Activated CD4-positive, alpha-beta memory T cell treated with anti-CD3 and anti-CD28 coated beads, Interleukin-2, amount 10 ng/mL, durations not matched to agents 7 days and 5 days (primary cell): ENCODE measurements at regions of chr11 and their contacts with region 1.

Region 1: DNA sequence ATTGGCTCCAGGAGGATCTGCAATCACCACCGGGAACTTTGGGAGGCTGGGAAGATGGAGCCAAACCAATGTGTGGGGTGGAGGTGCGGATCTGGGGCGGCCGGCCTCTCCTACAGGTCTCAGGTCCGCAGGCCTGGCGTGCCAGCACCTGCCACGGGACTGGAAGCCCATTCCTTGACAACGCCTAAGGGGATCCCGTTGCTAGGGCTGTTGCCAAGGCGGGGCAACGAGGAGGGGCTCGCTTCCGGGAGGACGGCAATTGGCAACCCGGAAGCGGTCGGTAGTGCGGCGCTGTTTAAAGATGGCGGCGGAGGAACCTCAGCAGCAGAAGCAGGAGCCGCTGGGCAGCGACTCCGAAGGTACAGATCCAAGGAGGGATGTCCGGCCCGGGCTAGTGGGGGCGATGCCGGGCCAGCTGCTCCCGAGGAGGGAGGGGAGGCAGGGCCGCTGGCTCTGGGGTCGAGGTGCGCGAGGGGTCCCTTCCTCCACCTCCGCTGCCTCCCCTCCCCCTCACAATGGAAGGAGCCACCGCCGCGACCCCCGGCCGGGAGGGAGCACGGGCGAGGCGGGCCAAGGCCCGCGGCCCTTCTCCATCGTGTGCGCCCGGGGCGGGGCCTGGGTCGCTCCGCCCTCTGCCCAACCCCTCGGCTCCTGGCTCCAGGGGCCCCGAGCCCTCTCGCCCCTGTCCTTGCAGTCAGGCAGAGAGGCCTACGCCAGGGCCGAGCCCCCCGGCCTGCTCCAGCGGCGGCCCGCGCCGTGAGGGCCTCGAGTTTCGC is at the start of gene OTUB1:
- DNase-seq: peak; percentile 91
- H3K4me3 Mint-ChIP-seq: peak within 1 kb of the TSS; percentile 100
- H3K27ac Mint-ChIP-seq: peak within 1 kb of the TSS; percentile 93
- H3K4me1 Mint-ChIP-seq: peaks cover 37% of the 10 kb centered on the region
- H3K27me3 Mint-ChIP-seq: no peaks in the 10 kb centered on the region
- total RNA-seq, gene OTUB1: 86.8 to 93.6 TPM

Region 2: GRCh38 chr11:63614136-63614664 is 372.1 kb before region 1 on chr11 and contains the start of gene PLAAT3:
- CTCF ChIA-PET with region 1: no interaction called
- POLR2A ChIA-PET with region 1: no interaction called
- DNase-seq: peak; percentile 44
- H3K4me3 Mint-ChIP-seq: peak within 1 kb of the TSS; percentile 78
- H3K27ac Mint-ChIP-seq: no peak within 1 kb of the TSS
- H3K4me1 Mint-ChIP-seq: peaks cover 24% of the 10 kb centered on the region
- H3K27me3 Mint-ChIP-seq: peaks cover 5% of the 10 kb centered on the region
- total RNA-seq, gene PLAAT3: 13.1 to 14.9 TPM

Region 3: DNA sequence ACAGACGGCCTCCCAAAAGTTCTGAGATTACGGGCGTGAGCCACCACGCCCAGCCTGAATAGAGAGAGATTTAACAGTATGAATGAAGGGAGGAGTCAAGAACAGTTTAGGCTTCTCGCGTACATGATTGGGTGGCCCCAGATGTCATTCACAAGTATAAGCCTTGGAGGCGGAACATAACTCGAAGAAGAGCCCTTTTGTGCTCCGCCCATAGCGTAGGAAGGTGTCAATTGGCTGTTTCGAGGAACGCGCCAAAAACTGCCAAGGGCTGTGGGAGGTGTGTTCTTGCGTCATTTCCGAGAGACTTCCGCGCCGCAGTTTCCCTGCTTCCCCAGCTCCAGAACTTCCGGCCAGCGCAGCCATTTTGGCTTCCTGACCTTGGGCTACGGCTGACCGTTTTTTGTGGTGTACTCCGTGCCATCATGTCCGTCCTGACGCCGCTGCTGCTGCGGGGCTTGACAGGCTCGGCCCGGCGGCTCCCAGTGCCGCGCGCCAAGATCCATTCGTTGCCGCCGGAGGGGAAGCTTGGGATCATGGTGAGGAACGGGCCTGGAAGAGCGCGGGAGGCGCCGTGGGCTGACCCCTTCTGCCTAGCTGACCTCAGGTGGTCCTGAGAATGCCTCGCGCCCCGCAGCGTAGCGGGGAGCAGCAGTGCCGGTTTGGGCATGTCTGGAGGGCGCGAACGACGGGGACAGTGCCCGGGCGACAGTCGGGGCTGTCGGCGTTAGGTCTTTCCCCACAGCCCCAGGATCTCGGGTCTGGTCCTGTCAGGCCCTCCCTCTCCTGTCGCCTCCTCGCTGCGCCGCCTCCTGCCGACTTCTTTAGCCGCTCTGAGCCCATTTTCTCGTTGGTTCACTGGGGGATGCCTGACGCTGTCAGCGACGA is 11.8 kb before region 1 on chr11 and contains the start of gene COX8A:
- CTCF ChIA-PET with region 1: no interaction called
- POLR2A ChIA-PET with region 1: interaction called, 27 read pairs
- DNase-seq: peak; percentile 97
- H3K4me3 Mint-ChIP-seq: peak within 1 kb of the TSS; percentile 100
- H3K27ac Mint-ChIP-seq: peak within 1 kb of the TSS; percentile 98
- H3K4me1 Mint-ChIP-seq: peaks cover 38% of the 10 kb centered on the region
- H3K27me3 Mint-ChIP-seq: peaks cover under 1% of the 10 kb centered on the region
- total RNA-seq, gene COX8A: 506 to 527 TPM

Region 4: DNA sequence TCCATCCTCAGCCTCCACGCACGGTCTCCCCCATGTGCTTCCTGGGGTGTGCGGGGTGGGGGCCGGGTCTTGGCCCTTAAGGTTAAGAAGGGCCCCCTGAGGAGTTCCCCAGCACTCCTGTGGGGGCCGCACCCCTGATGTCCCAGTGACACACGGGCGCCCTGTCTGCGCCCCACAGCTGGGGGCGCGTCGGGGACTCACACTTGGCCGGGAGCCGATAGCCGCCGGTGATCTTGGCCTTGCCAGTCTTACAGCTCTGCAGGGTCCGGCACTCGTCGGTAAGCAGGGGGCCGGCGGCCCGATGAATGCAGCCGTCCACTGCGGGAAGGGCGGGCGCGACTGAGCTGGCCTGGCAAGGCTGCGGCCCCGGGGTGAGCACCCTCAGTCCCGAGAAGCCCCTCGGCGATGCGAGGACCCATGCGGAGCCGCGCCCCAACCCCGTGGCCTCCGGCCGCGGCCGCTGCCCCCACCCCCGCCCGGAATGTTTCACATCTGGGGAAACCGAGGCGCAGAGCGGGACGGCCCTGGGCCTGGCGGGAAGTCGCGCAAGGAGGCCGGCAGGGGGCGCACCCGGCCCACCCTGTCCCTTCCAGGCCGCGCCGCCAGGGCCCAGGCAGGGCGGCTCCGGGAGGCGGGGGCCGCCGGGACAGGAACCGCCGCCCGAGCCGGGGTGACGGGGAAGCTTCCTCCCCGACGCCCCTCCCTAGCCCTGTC is 13.8 kb after region 1 on chr11:
- CTCF ChIA-PET with region 1: interaction called, 7 read pairs
- POLR2A ChIA-PET with region 1: interaction called, 11 read pairs
- DNase-seq: peak; percentile 79
- H3K4me3 Mint-ChIP-seq: no peak overlapping the region
- H3K27ac Mint-ChIP-seq: no peak overlapping the region
- H3K4me1 Mint-ChIP-seq: peaks cover 11% of the 10 kb centered on the region
- H3K27me3 Mint-ChIP-seq: peaks cover 2% of the 10 kb centered on the region

Region 5: GRCh38 chr11:64015935-64016845 is 29.8 kb after region 1 on chr11:
- CTCF ChIA-PET with region 1: no interaction called
- POLR2A ChIA-PET with region 1: no interaction called
- DNase-seq: no peak
- H3K4me3 Mint-ChIP-seq: no peak overlapping the region
- H3K27ac Mint-ChIP-seq: no peak overlapping the region
- H3K4me1 Mint-ChIP-seq: no peaks in the 10 kb centered on the region
- H3K27me3 Mint-ChIP-seq: no peaks in the 10 kb centered on the region